ENCODE measurements at regions of chr3 and their contacts with region 1.

Region 1: GRCh38 chr3:128969993-128970739 is 23.7 kb downstream of the CFAP92 start:
- DNase-seq: peak; percentile 73
- ATAC-seq: peak; percentile 80
- H3K4me3 Mint-ChIP-seq: no peak overlapping the region
- H3K27ac Mint-ChIP-seq: no peak overlapping the region
- H3K4me1 Mint-ChIP-seq: peaks cover 6% of the 10 kb centered on the region
- H3K27me3 Mint-ChIP-seq: no peaks in the 10 kb centered on the region
- CTCF ChIP-seq: peak; percentile 96

Region 2: GRCh38 chr3:128497387-128498126 is 472.6 kb before region 1 on chr3:
- CTCF ChIA-PET with region 1: no interaction called
- POLR2A ChIA-PET with region 1: no interaction called
- intact Hi-C with region 1: no loop called
- DNase-seq: peak; percentile 81
- ATAC-seq: peak; percentile 70
- H3K4me3 Mint-ChIP-seq: peak overlapping the region; percentile 66
- H3K27ac Mint-ChIP-seq: no peak overlapping the region
- H3K4me1 Mint-ChIP-seq: no peaks in the 10 kb centered on the region
- H3K27me3 Mint-ChIP-seq: peaks cover 45% of the 10 kb centered on the region
- CTCF ChIP-seq: peak; percentile 98

Region 3: GRCh38 chr3:128767094-128767750 is 202.9 kb before region 1 on chr3:
- CTCF ChIA-PET with region 1: no interaction called
- POLR2A ChIA-PET with region 1: no interaction called
- intact Hi-C with region 1: no loop called
- DNase-seq: no peak
- ATAC-seq: no peak
- H3K4me3 Mint-ChIP-seq: no peak overlapping the region
- H3K27ac Mint-ChIP-seq: peak overlapping the region; percentile 62
- H3K4me1 Mint-ChIP-seq: peaks cover 78% of the 10 kb centered on the region
- H3K27me3 Mint-ChIP-seq: no peaks in the 10 kb centered on the region
- CTCF ChIP-seq: no peak

Region 4: GRCh38 chr3:128814519-128815317 is 155.4 kb before region 1 on chr3:
- CTCF ChIA-PET with region 1: no interaction called
- POLR2A ChIA-PET with region 1: no interaction called
- intact Hi-C with region 1: no loop called
- DNase-seq: no peak
- ATAC-seq: no peak
- H3K4me3 Mint-ChIP-seq: no peak overlapping the region
- H3K27ac Mint-ChIP-seq: peak overlapping the region; percentile 17
- H3K4me1 Mint-ChIP-seq: peaks cover 12% of the 10 kb centered on the region
- H3K27me3 Mint-ChIP-seq: no peaks in the 10 kb centered on the region
- CTCF ChIP-seq: no peak

Region 5: DNA sequence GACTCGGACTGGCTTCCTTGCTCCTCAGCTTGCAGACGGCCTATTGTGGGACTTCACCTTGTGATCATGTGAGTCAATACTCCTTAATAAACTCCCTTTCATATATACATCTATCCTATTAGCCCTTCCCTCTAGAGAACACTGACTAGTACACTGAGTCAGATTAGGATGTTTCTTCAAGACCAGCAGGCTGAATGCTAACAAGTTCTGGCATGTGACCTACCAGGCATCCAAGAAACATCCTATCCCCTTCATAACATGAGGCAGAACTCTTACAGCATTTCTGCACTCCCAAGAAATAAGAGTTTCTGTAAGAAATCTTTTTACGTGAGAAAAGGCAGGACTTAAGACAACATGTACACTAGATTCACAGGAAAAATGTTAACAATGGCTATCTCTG is 14.4 kb after region 1 on chr3:
- CTCF ChIA-PET with region 1: interaction called, 40 read pairs
- POLR2A ChIA-PET with region 1: no interaction called
- intact Hi-C with region 1: no loop called
- DNase-seq: no peak
- ATAC-seq: no peak
- H3K4me3 Mint-ChIP-seq: no peak overlapping the region
- H3K27ac Mint-ChIP-seq: no peak overlapping the region
- H3K4me1 Mint-ChIP-seq: no peaks in the 10 kb centered on the region
- H3K27me3 Mint-ChIP-seq: no peaks in the 10 kb centered on the region
- CTCF ChIP-seq: no peak

Region 6: GRCh38 chr3:129026728-129027543 is 56.8 kb after region 1 on chr3:
- CTCF ChIA-PET with region 1: interaction called, 37 read pairs
- POLR2A ChIA-PET with region 1: interaction called, 3 read pairs
- intact Hi-C with region 1: loop called (anchors 5 kb)
- DNase-seq: peak; percentile 96
- ATAC-seq: peak; percentile 99
- H3K4me3 Mint-ChIP-seq: peak overlapping the region; percentile 73
- H3K27ac Mint-ChIP-seq: peak overlapping the region; percentile 91
- H3K4me1 Mint-ChIP-seq: peaks cover 22% of the 10 kb centered on the region
- H3K27me3 Mint-ChIP-seq: no peaks in the 10 kb centered on the region
- CTCF ChIP-seq: peak; percentile 94

Region 7: GRCh38 chr3:129139911-129140310 is 169.7 kb after region 1 on chr3:
- CTCF ChIA-PET with region 1: interaction called, 10 read pairs
- POLR2A ChIA-PET with region 1: no interaction called
- intact Hi-C with region 1: no loop called
- DNase-seq: no peak
- ATAC-seq: no peak
- H3K4me3 Mint-ChIP-seq: no peak overlapping the region
- H3K27ac Mint-ChIP-seq: no peak overlapping the region
- H3K4me1 Mint-ChIP-seq: no peaks in the 10 kb centered on the region
- H3K27me3 Mint-ChIP-seq: no peaks in the 10 kb centered on the region
- CTCF ChIP-seq: no peak

Region 8: GRCh38 chr3:129224984-129225393 is 254.8 kb after region 1 on chr3:
- CTCF ChIA-PET with region 1: interaction called, 16 read pairs
- POLR2A ChIA-PET with region 1: interaction called, 4 read pairs
- intact Hi-C with region 1: no loop called
- DNase-seq: peak; percentile 36
- ATAC-seq: peak; percentile 79
- H3K4me3 Mint-ChIP-seq: peak overlapping the region; percentile 30
- H3K27ac Mint-ChIP-seq: peak overlapping the region; percentile 80
- H3K4me1 Mint-ChIP-seq: peaks cover 8% of the 10 kb centered on the region
- H3K27me3 Mint-ChIP-seq: no peaks in the 10 kb centered on the region
- CTCF ChIP-seq: no peak

Region 9: DNA sequence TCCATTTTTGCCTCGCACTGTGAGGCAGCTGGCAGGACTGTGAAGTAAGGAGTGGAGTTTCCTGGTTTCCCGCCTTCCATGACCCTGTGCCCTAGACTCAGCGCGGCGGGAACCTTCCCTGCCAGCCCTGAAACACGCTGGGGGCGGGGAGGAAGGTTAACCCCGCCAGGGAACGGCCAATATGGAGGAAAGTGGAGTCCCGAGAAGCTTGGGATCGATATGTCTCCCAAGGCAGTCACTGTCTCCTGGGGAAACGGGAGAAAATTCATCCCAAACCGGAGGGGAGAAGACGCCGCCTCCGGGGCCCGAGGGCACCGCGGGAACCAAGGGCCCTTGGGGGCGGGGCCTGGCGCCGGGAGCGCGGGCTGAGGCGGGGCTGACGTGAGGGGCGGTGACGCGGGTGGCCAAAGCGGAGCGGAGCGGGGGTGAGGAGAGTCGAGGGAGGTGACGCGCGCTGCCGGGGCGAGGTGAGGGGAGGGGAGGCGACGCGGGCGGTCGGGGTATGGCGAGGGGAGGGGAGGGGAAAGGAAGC is 308.3 kb after region 1 on chr3 and contains the start of gene HMCES:
- CTCF ChIA-PET with region 1: interaction called, 16 read pairs
- POLR2A ChIA-PET with region 1: no interaction called
- intact Hi-C with region 1: no loop called
- DNase-seq: peak; percentile 95
- ATAC-seq: peak; percentile 84
- H3K4me3 Mint-ChIP-seq: peak within 1 kb of the TSS; percentile 100
- H3K27ac Mint-ChIP-seq: peak within 1 kb of the TSS; percentile 99
- H3K4me1 Mint-ChIP-seq: peaks cover 50% of the 10 kb centered on the region
- H3K27me3 Mint-ChIP-seq: no peaks in the 10 kb centered on the region
- CTCF ChIP-seq: no peak
- total RNA-seq, gene HMCES: 54.5 to 57.8 TPM